ENCODE measurements at regions of chr12 and their contacts with region 1.

Region 1: DNA sequence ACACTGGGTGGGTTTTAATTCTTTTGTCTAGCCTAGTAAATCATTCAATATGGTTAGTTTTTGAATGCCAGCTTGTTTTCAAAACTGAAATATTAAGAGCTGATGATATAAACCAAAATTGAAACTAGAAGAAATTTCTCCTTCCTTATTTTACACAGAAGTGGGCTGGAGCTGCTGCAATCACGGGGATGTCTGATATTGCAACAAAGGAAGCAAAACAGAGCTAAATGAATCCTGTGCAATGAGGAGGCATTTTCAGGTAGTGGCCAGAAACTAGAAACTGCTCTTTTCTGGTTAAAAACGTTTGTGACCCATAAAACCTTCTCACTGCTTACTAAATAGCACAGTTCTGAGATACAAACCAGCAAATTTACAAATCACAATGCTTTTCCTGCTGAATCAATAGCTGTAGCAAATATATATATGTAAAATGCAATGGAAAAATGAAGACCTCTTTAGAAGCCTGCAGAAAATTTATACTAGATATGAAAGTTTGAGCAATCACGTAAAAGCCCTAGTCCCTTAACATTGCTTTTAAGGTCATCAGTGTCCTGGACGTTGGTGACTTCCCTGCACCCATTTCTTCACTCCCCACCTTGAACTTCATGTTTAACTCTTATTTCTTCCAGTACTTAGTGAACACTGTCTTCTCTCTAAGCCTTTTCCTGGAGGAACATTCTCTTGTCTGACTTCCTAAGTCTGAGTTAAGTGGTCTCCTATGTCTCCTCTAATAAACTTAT is 15.9 kb upstream of the LRRK2 start:
- DNase-seq: no peak
- ATAC-seq: peak in 4 of 8 donors; percentile 31 to 61 (median 50)
- H3K4me3 ChIP-seq: no peak overlapping the region
- H3K27ac ChIP-seq: peak overlapping the region in 2 of 10 donors; percentile 46 to 70
- H3K4me1 ChIP-seq: peaks cover 0 to 35% (median 0%) of the 10 kb centered on the region in 9 donors
- H3K27me3 ChIP-seq: peaks cover 0 to 3% (median 0%) of the 10 kb centered on the region in 7 donors
- CTCF ChIP-seq: no peak

Region 2: DNA sequence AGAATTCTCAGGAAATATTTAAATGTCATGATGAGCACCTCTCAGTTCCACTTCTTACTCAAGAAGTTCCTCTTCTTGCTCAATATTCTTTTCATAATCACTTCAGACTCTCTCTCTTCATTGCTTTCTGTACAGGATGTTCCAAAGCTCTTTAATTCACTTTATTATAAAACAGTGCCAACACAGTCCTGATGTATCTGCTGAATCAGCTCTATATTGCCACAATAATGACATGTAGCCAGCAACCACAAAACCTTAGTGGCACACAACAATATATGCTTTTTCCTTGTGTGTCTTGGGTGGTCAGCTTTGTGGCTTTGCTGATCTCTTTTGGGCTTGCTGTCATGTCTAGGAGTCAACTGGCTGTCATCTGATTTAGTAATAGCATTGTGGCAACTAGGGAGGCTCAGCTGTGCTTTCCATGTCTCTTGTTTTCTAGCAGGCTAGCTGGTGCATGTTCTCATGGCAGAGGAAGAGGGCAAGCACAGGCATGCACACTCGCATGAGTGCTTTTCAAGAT is 50.2 kb before region 1 on chr12:
- intact Hi-C with region 1: loop called in 1 of 10 experiments (anchors 5 kb)
- DNase-seq: no peak
- ATAC-seq: peak in 4 of 8 donors; percentile 30 to 84 (median 64)
- H3K4me3 ChIP-seq: no peak overlapping the region
- H3K27ac ChIP-seq: peak overlapping the region in 1 of 10 donors; percentile 78
- H3K4me1 ChIP-seq: peaks cover 0 to 18% (median 0%) of the 10 kb centered on the region in 9 donors
- H3K27me3 ChIP-seq: no peaks in the 10 kb centered on the region
- CTCF ChIP-seq: no peak

Measured in heart right ventricle (tissue), 16 donors.